ENCODE measurements at regions of chr19 and their contacts with region 1.

Region 1: DNA sequence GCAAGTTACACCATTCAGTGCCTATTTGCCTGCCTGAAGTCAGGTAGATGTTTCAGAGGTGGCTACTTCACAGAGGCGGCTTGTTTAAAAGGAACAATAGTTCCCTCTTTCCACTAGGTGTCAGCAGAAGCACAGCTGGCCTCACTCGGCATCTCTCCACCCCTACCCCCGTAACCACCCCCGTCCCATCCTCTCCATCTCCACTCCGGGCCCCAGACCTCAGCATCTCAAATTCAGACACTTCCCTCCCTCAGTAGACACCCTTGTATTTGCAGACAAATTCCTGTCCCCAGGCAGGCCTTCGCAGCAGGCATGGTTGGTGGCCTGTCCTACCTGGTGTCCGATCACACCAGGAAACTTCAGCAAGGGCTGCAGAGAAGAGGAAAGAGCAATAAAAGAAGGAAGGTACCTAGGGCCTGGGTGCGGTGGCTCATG is 9.1 kb upstream of the DPP9 start:
- DNase-seq: peak; percentile 47
- H3K4me3 Mint-ChIP-seq: peak overlapping the region; percentile 13
- H3K27ac Mint-ChIP-seq: no peak overlapping the region
- H3K4me1 Mint-ChIP-seq: peaks cover 15% of the 10 kb centered on the region
- H3K27me3 Mint-ChIP-seq: peaks cover 7% of the 10 kb centered on the region

Region 2: DNA sequence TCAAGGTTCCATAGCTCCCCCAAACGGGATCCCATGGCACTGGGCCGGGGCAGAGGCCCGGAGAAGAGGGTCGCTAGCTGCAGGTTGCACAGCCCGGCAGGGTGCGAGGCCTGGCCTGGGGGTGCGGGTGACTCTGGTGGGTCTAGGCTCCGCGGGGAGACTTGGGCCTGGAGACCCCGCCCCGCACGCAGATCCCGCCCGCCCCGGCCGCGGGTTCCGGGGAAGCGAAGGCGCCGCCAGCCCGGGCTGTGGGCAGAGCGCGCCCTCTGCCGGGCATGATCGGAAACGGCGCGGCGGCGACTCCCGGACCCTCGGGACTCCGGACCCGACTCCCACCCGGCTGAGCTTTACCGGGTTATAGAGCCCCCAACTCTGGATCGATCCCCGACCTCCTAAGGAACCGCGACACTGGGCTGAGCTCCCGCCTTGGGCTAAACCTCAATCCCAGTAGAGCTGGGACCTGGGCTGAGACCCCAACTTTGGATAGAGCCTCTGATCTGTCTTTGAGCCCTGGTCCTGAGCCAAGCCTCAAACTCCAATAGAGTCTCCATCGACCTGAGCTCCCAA is 96.5 kb before region 1 on chr19:
- intact Hi-C with region 1: no loop called
- DNase-seq: peak; percentile 75
- H3K4me3 Mint-ChIP-seq: peak overlapping the region; percentile 39
- H3K27ac Mint-ChIP-seq: peak overlapping the region; percentile 18
- H3K4me1 Mint-ChIP-seq: peaks cover 34% of the 10 kb centered on the region
- H3K27me3 Mint-ChIP-seq: peaks cover 2% of the 10 kb centered on the region

Region 3: DNA sequence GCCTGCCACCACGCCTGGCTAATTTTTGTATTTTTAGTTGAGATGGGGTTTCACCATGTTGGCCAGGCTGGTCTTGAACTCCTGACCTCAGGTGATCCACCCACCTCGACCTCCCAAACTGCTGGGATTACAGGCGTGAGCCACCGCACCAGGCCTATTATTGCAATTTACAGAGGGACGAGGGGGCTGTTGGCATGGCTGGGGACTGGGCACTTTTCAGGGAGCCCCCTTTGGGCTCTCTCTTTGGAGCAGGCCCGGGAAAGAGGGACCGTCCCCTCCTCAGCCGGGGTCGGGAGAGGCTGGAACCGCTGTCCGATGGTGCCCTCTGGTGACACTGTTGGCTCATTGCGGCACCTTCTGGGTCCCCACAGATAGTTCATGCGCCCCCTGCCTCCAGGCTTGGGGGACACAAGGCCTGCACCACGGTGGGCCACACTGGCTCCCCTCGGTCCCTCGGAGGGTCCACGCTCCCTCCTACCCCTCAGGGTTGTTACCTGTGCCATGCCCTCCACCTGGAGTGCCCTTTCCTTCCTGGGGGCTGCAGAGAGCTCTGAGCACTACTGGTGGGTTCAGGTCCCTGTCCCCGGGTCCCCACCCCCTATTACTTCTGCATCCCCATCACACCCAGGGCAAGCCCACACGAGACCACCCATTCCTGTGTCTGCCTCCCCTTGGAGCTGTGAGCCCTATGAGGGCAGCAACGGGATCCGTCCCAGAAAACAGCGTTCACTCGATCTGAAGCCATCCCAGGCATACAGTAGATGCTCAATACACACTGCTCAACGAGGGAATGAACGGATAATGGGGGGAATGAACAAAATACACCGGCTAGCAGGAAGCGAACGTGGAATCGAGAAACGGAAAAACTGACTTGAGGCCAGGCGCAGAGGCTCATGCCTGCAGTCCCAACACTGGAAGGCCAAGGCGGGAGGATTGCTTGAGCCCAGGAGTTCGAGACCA is 71.3 kb after region 1 on chr19:
- intact Hi-C with region 1: loop called (anchors 1 kb)
- DNase-seq: peak; percentile 33
- H3K4me3 Mint-ChIP-seq: no peak overlapping the region
- H3K27ac Mint-ChIP-seq: no peak overlapping the region
- H3K4me1 Mint-ChIP-seq: no peaks in the 10 kb centered on the region
- H3K27me3 Mint-ChIP-seq: no peaks in the 10 kb centered on the region

Measured in activated T-helper 1 cell treated with anti-CD3 and anti-CD28 coated beads, Interleukin-12 subunit alpha, Interleukin-12 subunit beta, Interleukin-2, Interleukin-4 antibody, amounts not matched to agents 30 ng/mL and 10 ng/mL and 1 ng/mL, durations not matched to agents 14 hours and 24 hours and 36 hours (primary cell).